HAP-1 (cell line): ENCODE measurements at regions of chr19 and their contacts with region 1.

Region 1: DNA sequence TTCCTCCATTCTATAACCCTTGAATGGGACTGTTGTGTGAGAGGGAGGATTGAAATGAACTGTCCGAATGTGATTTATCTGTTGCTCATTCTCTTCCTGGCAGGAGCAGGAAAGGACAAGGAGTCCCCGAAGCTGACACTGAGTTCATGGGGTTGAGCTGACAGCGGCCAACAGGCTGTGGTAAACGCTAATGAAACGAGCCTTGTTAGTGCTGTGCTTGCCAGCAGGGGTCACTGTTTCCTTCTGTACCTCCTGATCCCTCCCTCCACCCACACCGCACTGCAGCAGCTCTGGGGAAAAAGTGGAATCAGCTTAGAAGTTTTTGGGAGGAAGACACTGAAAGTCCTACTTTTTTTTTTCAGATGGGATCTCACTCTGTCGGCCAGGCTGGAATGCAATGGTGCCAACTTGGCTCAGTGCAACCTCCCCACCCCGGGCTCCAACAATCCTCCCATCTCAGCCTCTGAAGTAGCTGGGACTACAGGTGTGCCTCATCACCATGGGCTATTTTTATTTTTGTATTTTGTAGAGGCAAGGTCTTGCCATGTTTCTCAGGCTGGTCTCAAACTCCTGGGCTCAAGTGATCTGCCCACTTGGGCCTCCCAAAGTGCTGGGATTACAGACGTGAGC is 6.7 kb upstream of the ZNF761 start:
- DNase-seq: peak; percentile 58 to 84
- H3K4me3 ChIP-seq: no peak overlapping the region
- H3K4me1 ChIP-seq: no peaks in the 10 kb centered on the region
- H3K27me3 ChIP-seq: no peaks in the 10 kb centered on the region

Region 2: DNA sequence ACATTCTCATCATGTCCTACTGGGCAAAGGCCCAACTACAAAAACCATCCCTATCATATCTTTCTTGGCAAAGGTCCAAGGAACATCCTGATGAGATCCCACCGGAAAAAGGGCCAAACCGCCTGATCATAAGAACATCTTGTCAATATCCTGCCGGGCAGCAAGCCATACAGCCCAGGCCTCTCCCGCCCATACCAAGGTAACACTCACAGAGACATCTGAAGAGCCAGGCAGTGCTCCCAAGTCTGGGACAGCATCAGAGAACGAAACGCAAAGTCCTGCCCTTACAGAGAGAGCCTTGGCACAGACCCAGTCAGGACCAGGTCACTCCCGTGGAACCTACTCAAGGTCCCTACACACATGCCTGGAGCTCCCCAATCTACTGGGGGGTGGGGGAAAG is 94.4 kb after region 1 on chr19:
- in situ Hi-C with region 1: loop called (anchors 5 kb)
- DNase-seq: no peak
- H3K4me3 ChIP-seq: no peak overlapping the region
- H3K4me1 ChIP-seq: no peaks in the 10 kb centered on the region
- H3K27me3 ChIP-seq: no peaks in the 10 kb centered on the region